Activated B cell treated with CpG ODN at 0.5 μM for 24 hours (primary cell): ENCODE measurements at regions of chr6 and their contacts with region 1.

Region 1: GRCh38 chr6:129893640-129894039 is 32.5 kb upstream of the TMEM244 start:
- DNase-seq: no peak
- ATAC-seq: no peak
- H3K4me3 Mint-ChIP-seq: no peak overlapping the region
- H3K27ac Mint-ChIP-seq: no peak overlapping the region
- H3K4me1 Mint-ChIP-seq: peaks cover 22% of the 10 kb centered on the region
- H3K27me3 Mint-ChIP-seq: no peaks in the 10 kb centered on the region
- CTCF ChIP-seq: no peak

Region 2: GRCh38 chr6:129621247-129621646 is 272.4 kb before region 1 on chr6:
- CTCF ChIA-PET with region 1: no interaction called
- POLR2A ChIA-PET with region 1: no interaction called
- intact Hi-C with region 1: no loop called
- DNase-seq: no peak
- ATAC-seq: peak; percentile 71
- H3K4me3 Mint-ChIP-seq: no peak overlapping the region
- H3K27ac Mint-ChIP-seq: no peak overlapping the region
- H3K4me1 Mint-ChIP-seq: no peaks in the 10 kb centered on the region
- H3K27me3 Mint-ChIP-seq: no peaks in the 10 kb centered on the region
- CTCF ChIP-seq: no peak

Region 3: DNA sequence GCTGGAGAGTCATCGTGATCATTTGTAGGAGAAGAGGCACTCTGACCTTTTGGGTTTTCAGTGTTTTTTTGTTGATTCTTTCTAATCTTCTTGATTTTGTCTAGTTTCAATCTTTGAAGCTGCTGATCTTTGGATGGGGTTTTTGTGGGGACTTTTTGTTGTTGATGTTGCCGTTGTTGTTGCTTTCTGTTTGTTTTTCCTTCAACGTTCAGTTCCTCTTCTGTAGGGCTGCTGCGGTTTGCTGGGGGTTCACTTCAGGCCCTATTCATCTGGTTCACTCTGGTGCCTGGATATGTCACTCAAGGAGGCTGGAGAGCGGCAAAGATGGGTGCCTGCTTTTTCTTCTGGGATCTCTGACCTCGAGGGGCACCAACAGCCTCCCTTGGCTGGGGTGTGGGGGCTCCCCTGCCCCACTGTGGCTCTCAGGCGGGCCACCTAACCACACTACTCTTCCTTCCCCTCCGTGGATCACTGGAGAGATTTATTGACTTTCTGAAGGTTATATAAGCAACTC is 11.1 kb before region 1 on chr6:
- CTCF ChIA-PET with region 1: no interaction called
- POLR2A ChIA-PET with region 1: no interaction called
- intact Hi-C with region 1: loop called (anchors 1 kb)
- DNase-seq: peak; percentile 17
- ATAC-seq: peak; percentile 74
- H3K4me3 Mint-ChIP-seq: peak overlapping the region; percentile 66
- H3K27ac Mint-ChIP-seq: peak overlapping the region; percentile 83
- H3K4me1 Mint-ChIP-seq: peaks cover 27% of the 10 kb centered on the region
- H3K27me3 Mint-ChIP-seq: no peaks in the 10 kb centered on the region
- CTCF ChIP-seq: no peak

Region 4: DNA sequence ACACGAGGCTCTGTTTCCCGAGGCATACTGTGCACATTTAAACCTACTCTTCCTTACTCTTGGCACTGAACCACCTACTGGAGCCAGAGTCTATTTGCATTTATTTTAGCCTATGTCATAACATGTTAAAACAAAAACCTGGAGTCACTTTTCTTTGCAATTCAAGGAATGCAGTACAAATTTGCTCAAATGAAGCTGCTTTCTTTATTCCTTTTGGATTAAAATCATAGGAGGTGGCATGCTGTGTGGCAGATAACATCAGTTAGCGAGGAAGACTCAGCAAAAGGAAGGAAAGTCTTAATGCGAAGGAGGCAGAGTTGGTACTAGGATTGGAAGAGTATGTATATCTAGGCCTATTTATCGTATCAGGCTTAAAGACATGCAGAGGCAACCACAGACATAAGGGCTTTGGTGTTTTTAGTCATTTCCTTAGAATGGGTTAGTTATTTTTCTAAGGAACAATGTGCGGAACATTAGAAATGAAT is 236.2 kb after region 1 on chr6:
- CTCF ChIA-PET with region 1: no interaction called
- POLR2A ChIA-PET with region 1: no interaction called
- intact Hi-C with region 1: no loop called
- DNase-seq: no peak
- ATAC-seq: no peak
- H3K4me3 Mint-ChIP-seq: no peak overlapping the region
- H3K27ac Mint-ChIP-seq: peak overlapping the region; percentile 71
- H3K4me1 Mint-ChIP-seq: peaks cover 58% of the 10 kb centered on the region
- H3K27me3 Mint-ChIP-seq: no peaks in the 10 kb centered on the region
- CTCF ChIP-seq: no peak